Endothelial cell of umbilical vein (primary cell): ENCODE measurements at regions of chr12 and their contacts with region 1.

Region 1: GRCh38 chr12:25970916-25971653 is 12.6 kb downstream of the RASSF8 start:
- DNase-seq: peak; percentile 25
- H3K4me3 ChIP-seq: no peak overlapping the region
- H3K27ac ChIP-seq: no peak overlapping the region
- H3K4me1 ChIP-seq: peaks cover 34% of the 10 kb centered on the region
- H3K27me3 ChIP-seq: no peaks in the 10 kb centered on the region
- CTCF ChIP-seq: peak in 1 of 2 donors; percentile 8
- POLR2A ChIP-seq: no peak

Region 2: DNA sequence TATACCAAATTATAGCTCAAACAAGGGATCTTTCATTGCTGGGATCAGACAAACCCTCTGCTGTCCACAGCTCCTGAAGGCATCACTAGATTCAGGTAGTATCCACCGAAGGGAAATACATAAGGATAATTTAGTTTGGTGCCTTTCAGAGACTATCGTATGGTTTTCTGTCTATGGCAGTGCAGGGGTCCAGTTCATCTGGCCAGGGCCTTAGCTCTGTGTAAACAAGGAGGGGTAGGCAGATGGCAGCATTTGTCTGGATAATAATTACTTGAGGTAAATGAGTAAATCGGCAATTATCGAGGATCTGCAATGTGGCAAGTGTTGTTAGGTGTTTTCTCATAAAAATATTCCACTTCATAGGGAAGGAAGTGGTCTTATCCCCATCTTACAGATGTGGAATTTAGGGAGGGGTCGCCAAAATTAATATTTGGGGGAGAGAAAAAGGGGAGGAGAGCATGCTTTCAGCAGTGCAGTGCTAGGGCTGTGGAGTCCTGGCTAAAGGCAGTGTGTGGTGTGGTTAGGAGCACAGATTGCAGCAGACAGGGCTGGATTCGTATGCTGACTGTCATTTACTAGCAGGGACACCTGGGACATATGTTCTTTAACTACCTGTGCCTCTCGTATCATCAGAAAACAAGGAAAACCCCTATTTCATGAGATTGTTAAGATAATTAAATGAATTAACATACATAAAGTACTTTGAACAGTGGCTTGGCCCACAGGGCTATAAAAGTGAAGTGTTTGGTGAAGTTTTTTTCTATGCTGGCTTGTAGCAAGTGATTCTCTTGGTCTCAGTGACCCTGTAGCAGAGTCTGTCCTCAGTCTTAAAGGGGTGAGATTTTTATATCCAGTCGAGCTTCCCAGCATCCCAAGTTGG is 14.5 kb after region 1 on chr12:
- CTCF ChIA-PET with region 1: interaction called, 36 read pairs
- POLR2A ChIA-PET with region 1: no interaction called
- dilution Hi-C with region 1: no loop called
- intact Hi-C with region 1: loop called (anchors 1 kb)
- DNase-seq: no peak
- H3K4me3 ChIP-seq: no peak overlapping the region
- H3K27ac ChIP-seq: no peak overlapping the region
- H3K4me1 ChIP-seq: peaks cover 17% of the 10 kb centered on the region
- H3K27me3 ChIP-seq: no peaks in the 10 kb centered on the region
- CTCF ChIP-seq: no peak
- POLR2A ChIP-seq: no peak